GM12878 (cell line): ENCODE measurements at regions of chr5 and their contacts with region 1.

Region 1: GRCh38 chr5:172479044-172479783 is 24.9 kb upstream of the SH3PXD2B start:
- DNase-seq: peak; percentile 17
- ATAC-seq: peak; percentile 99
- H3K4me3 ChIP-seq: no peak overlapping the region
- H3K27ac ChIP-seq: no peak overlapping the region
- H3K4me1 ChIP-seq: no peaks in the 10 kb centered on the region
- H3K27me3 ChIP-seq: no peaks in the 10 kb centered on the region; a peak in 1 of 4 replicates
- CTCF ChIP-seq: peak; percentile 73 to 83 (median 78)
- EP300 ChIP-seq: no peak
- POLR2A ChIP-seq: no peak
- RAD21 ChIP-seq: peak; percentile 91

Region 2: DNA sequence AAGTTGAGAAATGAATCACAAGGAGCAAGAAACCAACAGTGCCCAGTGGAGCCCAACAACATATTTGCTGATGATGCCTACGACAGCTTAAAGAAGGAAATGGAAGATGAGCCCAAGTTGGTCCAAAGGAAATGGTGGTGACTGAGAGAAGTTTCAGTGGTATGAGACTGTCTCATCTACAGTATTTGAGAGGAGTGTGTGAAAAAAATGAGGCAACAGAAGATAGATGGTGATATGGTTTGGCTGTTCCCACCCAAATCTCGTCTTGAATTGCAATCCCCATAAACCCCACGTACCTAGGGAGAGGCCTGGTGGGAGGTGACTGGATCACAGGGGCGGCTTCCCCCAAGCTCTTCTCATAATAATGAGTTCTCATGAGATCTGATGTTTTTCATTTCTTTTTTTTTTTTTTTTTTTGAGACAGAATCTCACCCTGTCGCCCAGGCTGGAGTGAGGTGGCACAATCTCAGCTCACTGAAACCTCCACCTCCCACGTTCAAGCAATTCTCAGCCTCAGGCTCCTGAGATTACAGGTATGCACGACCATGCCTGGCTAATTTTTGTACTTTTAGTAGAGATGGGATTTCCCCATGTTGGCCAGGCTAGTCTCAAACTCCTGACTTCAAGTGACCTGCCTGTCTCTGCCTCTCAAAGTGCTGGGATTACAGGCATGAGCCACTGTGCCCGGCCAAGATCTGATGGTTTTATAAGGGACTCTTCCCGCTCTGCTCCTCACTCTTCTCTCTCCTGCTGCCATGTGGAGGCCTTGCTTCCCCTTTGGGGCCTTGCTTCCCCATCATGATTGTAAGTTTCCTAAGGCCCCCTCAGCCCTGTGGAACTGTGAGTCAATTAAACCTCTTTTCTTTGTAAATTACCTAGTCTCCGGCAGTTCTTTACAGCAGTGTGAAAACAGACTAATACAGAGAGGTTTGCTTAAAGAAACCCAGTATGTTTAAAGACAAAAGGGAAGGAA is 255.0 kb before region 1 on chr5:
- CTCF ChIA-PET with region 1: no interaction called
- POLR2A ChIA-PET with region 1: no interaction called
- RAD21 ChIA-PET with region 1: no interaction called
- SMC1A ChIA-PET with region 1: no interaction called
- in situ Hi-C with region 1: no loop called
- intact Hi-C with region 1: no loop called
- DNase-seq: peak; percentile 95
- ATAC-seq: peak; percentile 90
- H3K4me3 ChIP-seq: 0 out of 2 replicates have a peak overlapping the region, but pooled peaks have one; percentile 5
- H3K27ac ChIP-seq: peak overlapping the region; percentile 94
- H3K4me1 ChIP-seq: peaks cover 25% of the 10 kb centered on the region
- H3K27me3 ChIP-seq: no peaks in the 10 kb centered on the region
- CTCF ChIP-seq: no peak
- EP300 ChIP-seq: no peak
- POLR2A ChIP-seq: no peak
- RAD21 ChIP-seq: no peak

Region 3: DNA sequence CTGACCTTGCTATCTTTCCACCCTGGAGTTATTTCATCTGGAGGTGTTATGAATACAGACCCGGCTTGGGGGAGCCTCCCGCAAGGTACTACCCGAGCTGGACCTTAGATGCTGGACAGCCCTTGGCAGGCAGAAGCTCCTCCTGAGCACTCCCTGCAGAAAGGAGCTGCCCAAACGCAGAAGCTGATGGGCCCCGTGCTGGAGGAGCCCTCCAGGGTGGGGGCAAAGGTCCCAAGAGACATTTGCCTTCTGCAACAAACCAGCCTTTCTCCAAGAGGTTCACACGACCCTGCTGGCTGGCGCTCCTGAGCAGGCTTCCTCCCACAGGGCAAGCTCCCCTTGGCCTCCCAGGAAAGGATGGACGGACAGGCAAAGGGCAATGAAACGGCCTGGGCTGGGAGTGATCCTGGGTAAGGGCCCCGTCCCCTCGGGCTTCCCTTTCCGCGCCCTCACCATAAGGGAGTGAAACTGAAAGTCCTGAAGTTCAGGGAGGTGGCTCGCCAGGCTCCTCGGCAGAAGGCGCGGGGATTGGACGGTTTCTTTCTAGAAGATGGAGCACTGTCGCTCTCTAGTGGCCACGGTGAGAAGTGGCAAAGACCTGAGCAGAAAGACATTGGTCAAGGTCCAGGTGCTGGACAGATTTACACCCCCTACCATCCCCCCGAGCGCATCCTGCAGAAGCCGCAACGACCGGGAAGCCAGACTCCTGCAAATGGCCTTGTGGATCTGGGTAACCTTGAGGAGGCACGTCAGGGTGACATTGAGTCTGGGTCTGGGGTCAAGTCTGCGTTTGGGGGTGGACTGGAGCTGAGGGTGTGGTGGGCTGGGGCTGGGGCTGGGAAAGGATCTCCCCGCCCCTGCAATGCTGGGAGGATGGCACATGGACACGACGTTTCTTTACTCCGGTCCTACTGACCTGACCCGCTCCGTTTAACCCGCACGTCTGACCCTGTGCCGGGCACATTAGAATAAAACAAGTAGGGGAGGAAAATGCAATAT is 218.2 kb after region 1 on chr5:
- CTCF ChIA-PET with region 1: interaction called, 21 read pairs
- POLR2A ChIA-PET with region 1: no interaction called
- RAD21 ChIA-PET with region 1: interaction called, 4 read pairs
- SMC1A ChIA-PET with region 1: interaction called, 12 read pairs
- in situ Hi-C with region 1: loop called (anchors 5 kb)
- intact Hi-C with region 1: loop called (anchors 1 kb)
- DNase-seq: peak; percentile 33
- ATAC-seq: peak; percentile 94
- H3K4me3 ChIP-seq: peak overlapping the region; percentile 75
- H3K27ac ChIP-seq: 0 out of 2 replicates have a peak overlapping the region, but pooled peaks have one; percentile 16
- H3K4me1 ChIP-seq: peaks cover 7% of the 10 kb centered on the region
- H3K27me3 ChIP-seq: no peaks in the 10 kb centered on the region; a peak in 2 of 4 replicates
- CTCF ChIP-seq: peak; percentile 89 to 98 (median 91)
- EP300 ChIP-seq: no peak
- POLR2A ChIP-seq: peak; percentile 65
- RAD21 ChIP-seq: peak; percentile 92

Region 4: DNA sequence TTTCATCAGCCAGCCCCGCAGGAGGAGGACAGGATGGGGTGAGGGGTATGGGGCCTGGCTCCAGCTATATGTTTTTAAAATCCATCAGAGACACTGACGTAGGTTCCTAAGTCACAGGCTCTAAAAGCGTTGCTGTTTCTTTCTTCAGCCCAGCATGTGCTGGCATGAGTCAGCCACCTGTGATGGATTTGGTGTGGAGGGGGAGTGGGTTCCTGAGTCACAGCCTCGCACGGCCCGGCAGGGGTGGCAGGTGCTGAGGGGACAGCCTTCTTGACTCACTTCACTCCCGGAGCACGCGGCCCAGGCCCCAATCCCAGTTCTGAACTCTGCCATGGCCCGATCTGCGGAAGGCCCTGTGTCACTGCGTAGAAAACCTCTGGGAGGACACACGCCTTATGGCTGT is 441.2 kb after region 1 on chr5:
- CTCF ChIA-PET with region 1: no interaction called
- POLR2A ChIA-PET with region 1: no interaction called
- RAD21 ChIA-PET with region 1: no interaction called
- SMC1A ChIA-PET with region 1: no interaction called
- in situ Hi-C with region 1: loop called (anchors 10 kb)
- intact Hi-C with region 1: no loop called
- DNase-seq: no peak
- ATAC-seq: no peak
- H3K4me3 ChIP-seq: no peak overlapping the region
- H3K27ac ChIP-seq: no peak overlapping the region
- H3K4me1 ChIP-seq: no peaks in the 10 kb centered on the region
- H3K27me3 ChIP-seq: no peaks in the 10 kb centered on the region
- CTCF ChIP-seq: no peak
- EP300 ChIP-seq: no peak
- POLR2A ChIP-seq: no peak
- RAD21 ChIP-seq: no peak